Activated CD4-positive, alpha-beta memory T cell treated with anti-CD3 and anti-CD28 coated beads for 36 hours (primary cell): ENCODE measurements at regions of chr10 and their contacts with region 1.

Region 1: DNA sequence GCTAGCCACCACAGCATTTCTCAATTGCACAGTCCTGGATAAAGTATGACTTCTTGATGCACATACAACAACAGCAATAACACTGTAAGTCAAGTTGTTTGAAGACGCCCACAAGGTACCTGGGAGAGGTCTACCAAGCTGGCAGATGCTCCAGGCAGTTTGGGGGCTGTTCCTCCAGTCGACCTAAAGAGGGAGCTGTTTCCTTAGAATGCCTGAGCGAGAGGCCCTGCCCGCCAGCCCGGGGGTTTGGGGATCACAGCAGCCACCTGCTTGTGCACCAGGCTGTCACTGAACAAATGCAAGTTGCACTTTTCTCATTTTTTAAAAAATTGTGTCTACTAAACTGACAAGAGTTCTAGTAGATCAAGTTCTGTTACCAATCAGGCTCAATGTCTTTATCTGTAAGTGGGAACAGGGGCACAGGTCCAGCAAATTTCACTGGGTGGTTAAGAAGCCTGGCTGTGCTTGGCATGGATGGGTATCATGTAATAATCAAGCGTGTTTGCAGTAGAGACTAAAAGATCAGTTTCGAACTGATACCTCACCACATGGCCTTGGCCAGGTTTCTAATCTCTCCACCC is 193.8 kb upstream of the ADO start:
- DNase-seq: peak; percentile 85
- H3K4me3 Mint-ChIP-seq: no peak overlapping the region
- H3K27ac Mint-ChIP-seq: no peak overlapping the region
- H3K4me1 Mint-ChIP-seq: peaks cover 37% of the 10 kb centered on the region
- H3K27me3 Mint-ChIP-seq: peaks cover 5% of the 10 kb centered on the region

Region 2: DNA sequence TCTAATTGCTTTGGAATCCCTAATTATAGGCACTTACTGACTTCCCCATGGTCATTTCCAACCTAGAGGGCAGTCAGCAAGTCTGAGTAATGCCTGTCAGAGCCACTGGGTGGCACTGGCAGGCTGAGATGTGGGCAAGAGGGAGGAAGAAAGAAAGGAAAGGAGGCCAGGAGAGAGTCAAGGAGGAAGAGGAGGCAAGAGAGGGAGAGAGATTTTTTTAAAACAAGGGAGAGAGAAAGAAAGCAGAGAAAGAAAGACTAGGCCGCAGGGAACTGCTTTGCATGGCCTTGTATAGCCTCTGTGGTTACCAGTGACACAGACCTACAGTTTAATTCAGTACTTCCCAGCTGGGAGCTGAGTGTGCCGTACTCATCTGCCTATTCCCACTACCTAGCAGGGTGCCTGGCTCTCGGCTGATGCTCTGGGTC is 16.6 kb before region 1 on chr10:
- CTCF ChIA-PET with region 1: interaction called, 15 read pairs
- POLR2A ChIA-PET with region 1: no interaction called
- intact Hi-C with region 1: no loop called
- DNase-seq: peak; percentile 64
- H3K4me3 Mint-ChIP-seq: no peak overlapping the region
- H3K27ac Mint-ChIP-seq: no peak overlapping the region
- H3K4me1 Mint-ChIP-seq: peaks cover 2% of the 10 kb centered on the region
- H3K27me3 Mint-ChIP-seq: peaks cover 2% of the 10 kb centered on the region

Region 3: DNA sequence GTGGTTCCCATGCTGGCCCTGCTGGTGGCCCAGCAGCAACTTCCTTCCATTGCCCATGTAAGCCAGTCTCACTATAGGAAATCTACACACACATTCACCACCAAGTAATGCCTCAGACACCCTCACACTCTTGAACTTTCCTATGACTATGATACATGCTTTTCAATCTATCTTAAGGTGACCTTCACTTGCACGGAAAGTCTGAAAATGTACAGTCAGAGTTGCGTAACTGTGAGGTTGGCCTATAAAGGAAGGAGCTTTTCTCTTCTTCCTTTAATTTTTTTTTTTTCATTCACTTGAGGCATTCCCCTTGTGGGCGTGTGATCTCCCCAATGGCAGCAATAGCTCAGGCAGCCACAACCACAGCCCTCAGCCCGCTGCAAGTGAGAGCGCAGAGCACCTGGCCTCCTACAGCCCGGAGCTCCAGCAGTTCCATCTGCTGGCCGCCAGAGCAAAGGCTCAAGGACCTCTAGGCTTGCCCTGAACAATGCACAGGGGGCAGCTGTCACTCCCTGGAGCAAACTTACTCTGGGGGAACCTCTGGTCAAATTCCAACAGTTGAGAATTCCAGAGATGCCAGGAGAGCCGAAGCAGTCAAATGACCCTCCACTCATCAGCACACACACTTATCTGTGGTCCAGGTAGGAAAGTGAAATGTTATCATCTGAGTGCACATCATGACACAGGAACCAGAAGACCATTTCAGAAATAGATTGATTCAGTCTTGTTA is 70.6 kb after region 1 on chr10:
- CTCF ChIA-PET with region 1: interaction called, 37 read pairs
- POLR2A ChIA-PET with region 1: interaction called, 4 read pairs
- intact Hi-C with region 1: loop called (anchors 1 kb)
- DNase-seq: peak; percentile 92
- H3K4me3 Mint-ChIP-seq: no peak overlapping the region
- H3K27ac Mint-ChIP-seq: peak overlapping the region; percentile 74
- H3K4me1 Mint-ChIP-seq: peaks cover 33% of the 10 kb centered on the region
- H3K27me3 Mint-ChIP-seq: peaks cover 2% of the 10 kb centered on the region

Region 4: GRCh38 chr10:62738916-62739315 is 128.2 kb after region 1 on chr10:
- CTCF ChIA-PET with region 1: interaction called, 13 read pairs
- POLR2A ChIA-PET with region 1: no interaction called
- intact Hi-C with region 1: no loop called
- DNase-seq: no peak
- H3K4me3 Mint-ChIP-seq: no peak overlapping the region
- H3K27ac Mint-ChIP-seq: no peak overlapping the region
- H3K4me1 Mint-ChIP-seq: peaks cover 17% of the 10 kb centered on the region
- H3K27me3 Mint-ChIP-seq: peaks cover 3% of the 10 kb centered on the region

Region 5: DNA sequence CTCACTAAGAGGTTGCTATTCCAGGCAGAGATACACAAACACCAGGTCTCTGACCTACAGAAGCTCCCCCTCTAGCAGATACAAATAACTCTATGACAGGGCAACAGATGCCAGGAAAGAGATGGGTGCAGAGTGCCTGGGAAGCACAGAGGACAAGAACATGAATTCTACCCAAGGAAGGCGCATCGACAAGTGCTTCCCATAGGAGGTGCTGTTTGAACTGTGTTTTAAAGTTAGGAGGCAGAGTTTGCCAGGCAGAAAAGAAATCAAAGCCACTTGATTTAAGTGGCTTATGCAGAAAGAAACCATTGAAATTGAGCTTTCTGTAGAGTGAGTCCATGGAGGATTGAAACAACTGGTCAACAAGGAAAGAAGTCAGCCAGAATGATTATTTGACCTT is 240.7 kb after region 1 on chr10:
- CTCF ChIA-PET with region 1: no interaction called
- POLR2A ChIA-PET with region 1: interaction called, 3 read pairs
- intact Hi-C with region 1: loop called (anchors 1 kb)
- DNase-seq: peak; percentile 55
- H3K4me3 Mint-ChIP-seq: no peak overlapping the region
- H3K27ac Mint-ChIP-seq: no peak overlapping the region
- H3K4me1 Mint-ChIP-seq: peaks cover 46% of the 10 kb centered on the region
- H3K27me3 Mint-ChIP-seq: peaks cover 8% of the 10 kb centered on the region

Region 6: DNA sequence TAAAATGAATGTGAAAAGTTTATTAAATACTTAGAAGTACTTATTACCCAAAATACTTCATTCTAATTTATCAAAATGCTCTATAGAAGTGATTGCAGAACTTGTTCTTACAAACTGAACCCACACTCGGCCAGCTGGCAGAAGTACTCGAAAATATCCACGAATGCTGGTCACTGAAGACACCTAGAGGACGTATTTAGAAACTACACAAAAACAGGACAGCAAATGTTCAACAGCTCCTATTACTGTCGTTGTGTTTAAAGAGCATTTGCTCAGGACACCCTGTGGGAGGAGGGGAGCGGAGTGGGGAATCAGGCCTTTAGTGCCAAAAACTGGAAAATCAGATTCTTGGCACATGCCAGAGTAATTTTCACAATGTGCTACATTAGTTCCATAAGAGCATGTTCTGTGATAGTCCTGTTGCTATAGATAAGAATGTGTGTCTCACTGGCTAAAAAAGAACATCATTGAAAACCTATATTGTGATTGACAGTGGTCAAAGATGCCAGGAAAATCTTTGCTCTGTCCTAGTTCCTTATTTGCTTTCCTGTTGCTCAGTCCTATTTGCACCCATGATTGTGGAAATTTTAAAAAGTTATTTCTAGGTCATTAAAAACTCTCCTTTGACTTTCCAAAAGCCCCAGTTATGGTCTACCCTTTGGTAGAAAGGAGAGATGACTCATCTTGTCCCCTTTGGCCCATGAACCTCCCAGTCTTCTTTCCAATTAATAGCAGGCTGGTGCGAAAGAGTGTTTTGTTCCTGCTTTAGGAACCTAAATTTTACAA is 473.4 kb after region 1 on chr10:
- CTCF ChIA-PET with region 1: interaction called, 19 read pairs
- POLR2A ChIA-PET with region 1: no interaction called
- intact Hi-C with region 1: loop called (anchors 5 kb)
- DNase-seq: peak; percentile 51
- H3K4me3 Mint-ChIP-seq: no peak overlapping the region
- H3K27ac Mint-ChIP-seq: no peak overlapping the region
- H3K4me1 Mint-ChIP-seq: peaks cover 2% of the 10 kb centered on the region
- H3K27me3 Mint-ChIP-seq: peaks cover 8% of the 10 kb centered on the region